ENCODE measurements at regions of chr6 and their contacts with region 1.

Region 1: GRCh38 chr6:125217992-125218391 is 64.4 kb downstream of the TPD52L1 start:
- DNase-seq: no peak
- H3K4me3 ChIP-seq: no peak overlapping the region
- H3K27ac ChIP-seq: no peak overlapping the region
- H3K4me1 ChIP-seq: peaks cover 12 to 25% (median 15%) of the 10 kb centered on the region in 4 donors
- H3K27me3 ChIP-seq: no peaks in the 10 kb centered on the region
- CTCF ChIP-seq: no peak
- EP300 ChIP-seq: no peak
- POLR2A ChIP-seq: no peak

Region 2: GRCh38 chr6:125140808-125141207 is 77.2 kb before region 1 on chr6:
- in situ Hi-C with region 1: no loop called
- intact Hi-C with region 1: no loop called
- DNase-seq: no peak
- H3K4me3 ChIP-seq: no peak overlapping the region
- H3K27ac ChIP-seq: no peak overlapping the region
- H3K4me1 ChIP-seq: no peaks in the 10 kb centered on the region
- H3K27me3 ChIP-seq: no peaks in the 10 kb centered on the region
- CTCF ChIP-seq: no peak
- EP300 ChIP-seq: no peak
- POLR2A ChIP-seq: no peak

Region 3: GRCh38 chr6:125197795-125198269 is 20.2 kb before region 1 on chr6:
- in situ Hi-C with region 1: no loop called
- intact Hi-C with region 1: loop called (anchors 1 kb)
- DNase-seq: peak; percentile 78
- H3K4me3 ChIP-seq: no peak overlapping the region
- H3K27ac ChIP-seq: peak overlapping the region; percentile 61 to 83 (median 76)
- H3K4me1 ChIP-seq: peaks cover 9 to 75% (median 24%) of the 10 kb centered on the region in 4 donors
- H3K27me3 ChIP-seq: no peaks in the 10 kb centered on the region
- CTCF ChIP-seq: no peak
- EP300 ChIP-seq: no peak
- POLR2A ChIP-seq: peak; percentile 12

Measured in transverse colon (tissue), 4 donors.